ENCODE measurements at regions of chr6 and their contacts with region 1.

Region 1: GRCh38 chr6:26156076-26156849 is 69.0 kb downstream of the HFE start:
- DNase-seq: peak; percentile 94
- ATAC-seq: peak; percentile 44
- H3K4me3 Mint-ChIP-seq: peak overlapping the region; percentile 100
- H3K27ac Mint-ChIP-seq: peak overlapping the region; percentile 99
- H3K4me1 Mint-ChIP-seq: peaks cover 43% of the 10 kb centered on the region
- H3K27me3 Mint-ChIP-seq: no peaks in the 10 kb centered on the region

Region 2: GRCh38 chr6:26025894-26026832 is 130.1 kb before region 1 on chr6:
- POLR2A ChIA-PET with region 1: interaction called, 253 read pairs
- DNase-seq: peak; percentile 86
- ATAC-seq: peak; percentile 35
- H3K4me3 Mint-ChIP-seq: peak overlapping the region; percentile 89
- H3K27ac Mint-ChIP-seq: peak overlapping the region; percentile 99
- H3K4me1 Mint-ChIP-seq: peaks cover 75% of the 10 kb centered on the region
- H3K27me3 Mint-ChIP-seq: no peaks in the 10 kb centered on the region

Region 3: DNA sequence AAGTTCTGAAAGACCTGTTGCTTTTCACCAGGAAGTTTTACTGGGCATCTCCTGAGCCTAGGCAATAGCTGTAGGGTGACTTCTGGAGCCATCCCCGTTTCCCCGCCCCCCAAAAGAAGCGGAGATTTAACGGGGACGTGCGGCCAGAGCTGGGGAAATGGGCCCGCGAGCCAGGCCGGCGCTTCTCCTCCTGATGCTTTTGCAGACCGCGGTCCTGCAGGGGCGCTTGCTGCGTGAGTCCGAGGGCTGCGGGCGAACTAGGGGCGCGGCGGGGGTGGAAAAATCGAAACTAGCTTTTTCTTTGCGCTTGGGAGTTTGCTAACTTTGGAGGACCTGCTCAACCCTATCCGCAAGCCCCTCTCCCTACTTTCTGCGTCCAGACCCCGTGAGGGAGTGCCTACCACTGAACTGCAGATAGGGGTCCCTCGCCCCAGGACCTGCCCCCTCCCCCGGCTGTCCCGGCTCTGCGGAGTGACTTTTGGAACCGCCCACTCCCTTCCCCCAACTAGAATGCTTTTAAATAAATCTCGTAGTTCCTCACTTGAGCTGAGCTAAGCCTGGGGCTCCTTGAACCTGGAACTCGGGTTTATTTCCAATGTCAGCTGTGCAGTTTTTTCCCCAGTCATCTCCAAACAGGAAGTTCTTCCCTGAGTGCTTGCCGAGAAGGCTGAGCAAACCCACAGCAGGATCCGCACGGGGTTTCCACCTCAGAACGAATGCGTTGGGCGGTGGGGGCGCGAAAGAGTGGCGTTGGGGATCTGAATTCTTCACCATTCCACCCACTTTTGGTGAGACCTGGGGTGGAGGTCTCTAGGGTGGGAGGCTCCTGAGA is 68.8 kb before region 1 on chr6 and contains the start of gene HFE:
- POLR2A ChIA-PET with region 1: interaction called, 26 read pairs
- DNase-seq: peak; percentile 65
- ATAC-seq: peak; percentile 9
- H3K4me3 Mint-ChIP-seq: peak within 1 kb of the TSS; percentile 86
- H3K27ac Mint-ChIP-seq: peak within 1 kb of the TSS; percentile 81
- H3K4me1 Mint-ChIP-seq: peaks cover 50% of the 10 kb centered on the region
- H3K27me3 Mint-ChIP-seq: no peaks in the 10 kb centered on the region
- total RNA-seq, gene HFE: 5.0 to 7.2 TPM

Region 4: DNA sequence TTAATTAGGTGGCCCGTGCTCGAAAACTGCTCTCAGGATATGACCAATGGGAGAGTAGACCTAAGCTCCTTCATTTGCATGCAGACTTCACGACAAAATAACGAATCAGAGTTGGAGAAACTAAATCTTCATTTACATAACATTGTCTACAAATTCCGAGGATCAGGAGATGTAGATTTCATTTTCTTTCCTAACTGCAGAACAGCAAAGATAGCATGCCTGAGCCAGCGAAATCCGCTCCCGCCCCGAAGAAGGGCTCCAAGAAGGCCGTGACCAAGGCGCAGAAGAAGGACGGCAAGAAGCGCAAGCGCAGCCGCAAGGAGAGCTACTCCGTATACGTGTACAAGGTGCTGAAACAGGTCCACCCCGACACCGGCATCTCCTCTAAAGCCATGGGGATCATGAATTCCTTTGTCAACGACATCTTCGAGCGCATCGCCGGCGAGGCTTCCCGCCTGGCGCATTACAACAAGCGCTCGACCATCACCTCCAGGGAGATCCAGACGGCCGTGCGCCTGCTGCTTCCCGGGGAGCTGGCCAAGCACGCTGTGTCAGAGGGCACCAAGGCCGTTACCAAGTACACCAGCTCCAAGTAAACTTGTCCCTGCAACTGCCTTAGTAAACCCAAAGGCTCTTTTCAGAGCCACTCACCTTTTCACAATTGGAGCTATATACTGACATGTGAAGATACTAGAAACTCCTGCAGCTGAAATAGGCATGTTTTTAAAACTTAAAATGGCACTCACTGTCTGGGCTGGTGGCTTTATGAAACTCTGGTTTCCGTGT is 27.5 kb after region 1 on chr6:
- POLR2A ChIA-PET with region 1: interaction called, 937 read pairs
- DNase-seq: peak; percentile 78
- ATAC-seq: peak; percentile 85
- H3K4me3 Mint-ChIP-seq: peak overlapping the region; percentile 96
- H3K27ac Mint-ChIP-seq: peak overlapping the region; percentile 99
- H3K4me1 Mint-ChIP-seq: peaks cover 48% of the 10 kb centered on the region
- H3K27me3 Mint-ChIP-seq: no peaks in the 10 kb centered on the region

Region 5: GRCh38 chr6:26234421-26235296 is 78.4 kb after region 1 on chr6:
- POLR2A ChIA-PET with region 1: interaction called, 233 read pairs
- DNase-seq: peak; percentile 76
- ATAC-seq: peak; percentile 59
- H3K4me3 Mint-ChIP-seq: peak overlapping the region; percentile 94
- H3K27ac Mint-ChIP-seq: peak overlapping the region; percentile 100
- H3K4me1 Mint-ChIP-seq: peaks cover 36% of the 10 kb centered on the region
- H3K27me3 Mint-ChIP-seq: no peaks in the 10 kb centered on the region

Region 6: DNA sequence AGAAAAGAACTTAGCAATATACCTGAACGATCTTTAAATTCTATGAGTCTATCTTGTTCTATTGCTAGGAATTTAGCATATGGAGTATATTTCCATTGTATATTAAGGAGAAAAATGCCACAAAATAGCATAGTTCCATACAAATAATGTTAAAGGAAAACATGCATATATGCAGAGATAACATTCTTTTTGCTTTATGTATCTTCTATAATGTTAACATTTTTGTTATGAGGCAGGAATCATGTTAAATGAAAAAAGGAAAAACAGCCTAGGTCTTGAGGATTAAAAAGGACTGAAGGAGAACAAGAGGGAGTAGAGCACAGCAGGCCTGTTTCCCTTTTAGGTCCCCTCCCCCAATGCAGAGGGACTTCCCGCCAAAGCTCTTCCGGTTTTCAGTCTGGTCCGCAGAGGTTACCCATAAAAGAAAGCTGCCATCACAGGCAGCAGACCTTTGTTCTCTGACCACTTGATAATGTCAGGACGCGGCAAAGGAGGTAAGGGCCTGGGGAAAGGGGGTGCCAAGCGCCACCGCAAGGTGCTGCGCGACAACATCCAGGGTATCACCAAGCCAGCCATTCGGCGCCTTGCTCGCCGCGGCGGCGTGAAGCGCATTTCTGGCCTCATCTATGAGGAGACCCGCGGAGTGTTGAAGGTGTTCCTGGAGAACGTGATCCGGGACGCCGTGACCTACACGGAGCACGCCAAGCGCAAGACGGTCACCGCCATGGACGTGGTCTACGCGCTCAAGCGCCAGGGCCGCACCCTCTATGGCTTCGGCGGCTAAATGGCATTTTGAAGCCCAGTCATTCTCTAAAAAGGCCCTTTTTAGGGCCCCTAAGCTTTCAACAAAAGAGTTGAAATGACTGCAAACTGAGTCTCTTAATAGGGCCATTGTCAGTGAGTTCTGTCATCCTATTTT is 982.8 kb after region 1 on chr6:
- POLR2A ChIA-PET with region 1: interaction called, 67 read pairs
- DNase-seq: peak; percentile 81
- ATAC-seq: peak; percentile 73
- H3K4me3 Mint-ChIP-seq: peak overlapping the region; percentile 95
- H3K27ac Mint-ChIP-seq: peak overlapping the region; percentile 98
- H3K4me1 Mint-ChIP-seq: peaks cover 39% of the 10 kb centered on the region
- H3K27me3 Mint-ChIP-seq: no peaks in the 10 kb centered on the region

Region 7: GRCh38 chr6:27871924-27872638 is 1715.8 kb after region 1 on chr6:
- POLR2A ChIA-PET with region 1: interaction called, 41 read pairs
- DNase-seq: peak; percentile 80
- ATAC-seq: peak; percentile 63
- H3K4me3 Mint-ChIP-seq: peak overlapping the region; percentile 92
- H3K27ac Mint-ChIP-seq: peak overlapping the region; percentile 93
- H3K4me1 Mint-ChIP-seq: peaks cover 44% of the 10 kb centered on the region
- H3K27me3 Mint-ChIP-seq: no peaks in the 10 kb centered on the region